ENCODE measurements at regions of chr10 and their contacts with region 1.

Region 1: DNA sequence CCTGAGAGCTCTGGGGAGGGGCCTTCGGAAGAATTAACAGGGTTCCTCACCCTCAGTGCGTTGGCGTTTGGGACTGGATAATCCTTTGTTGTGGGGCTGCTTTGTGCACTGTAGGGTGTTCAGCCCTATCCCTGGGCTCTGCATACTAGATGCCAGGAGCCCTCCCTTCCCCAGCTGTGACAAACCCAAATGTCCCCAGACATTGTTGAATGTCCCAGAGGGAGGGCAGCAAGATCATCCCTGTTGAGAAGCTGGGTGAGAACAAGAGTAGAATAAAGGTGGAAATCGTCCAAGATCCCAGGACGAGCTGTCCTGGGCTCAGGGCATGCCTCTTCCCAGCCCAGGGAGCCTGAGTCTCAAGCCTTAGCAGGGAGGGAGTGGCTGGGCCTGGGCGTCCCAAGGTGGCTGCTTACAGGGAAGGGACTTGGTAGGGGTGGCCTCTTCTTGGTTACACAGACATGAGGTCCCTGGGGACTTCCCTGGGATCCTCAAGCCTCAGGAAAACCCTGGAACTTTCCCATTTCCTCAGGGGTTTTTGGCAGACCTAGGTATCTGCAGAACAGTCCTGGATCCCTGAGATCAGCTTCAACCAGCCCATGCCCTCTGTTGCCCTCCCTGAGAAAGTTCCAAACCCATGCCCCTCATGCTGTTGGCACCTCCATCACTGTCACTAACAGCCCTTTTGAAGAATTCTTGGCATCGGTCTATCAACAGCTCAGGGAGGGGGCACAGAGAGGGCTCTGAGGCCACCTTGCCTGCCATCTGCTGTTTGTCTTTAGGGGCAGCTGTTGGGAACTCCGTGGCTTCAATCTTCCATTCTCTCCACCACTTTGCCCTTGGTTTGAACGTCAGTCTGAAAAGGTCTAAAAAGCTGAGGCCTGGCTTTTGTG is 53.7 kb downstream of the GOLGA7B start:
- DNase-seq: no peak
- H3K4me3 ChIP-seq: no peak overlapping the region
- CTCF ChIP-seq: no peak

Region 2: DNA sequence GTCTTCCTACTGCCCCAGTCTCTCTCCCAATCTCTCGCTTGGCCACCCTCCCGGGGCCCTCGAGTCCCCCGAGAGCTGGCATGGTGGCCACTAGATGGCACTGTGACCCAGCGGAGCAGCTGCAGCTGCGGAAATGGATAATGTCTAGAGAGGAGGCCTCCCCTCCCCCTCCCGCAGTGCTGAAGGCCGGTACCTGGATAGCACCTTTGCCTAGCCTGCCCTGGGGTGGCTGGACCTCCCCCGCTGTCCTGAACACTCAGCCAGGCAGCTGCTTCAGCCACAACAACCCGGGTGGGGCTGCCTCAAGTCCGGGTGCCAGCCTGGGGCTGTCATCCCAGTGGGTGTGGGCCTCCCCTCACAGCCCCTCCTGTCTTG is 11.5 kb after region 1 on chr10:
- CTCF ChIA-PET with region 1: interaction called, 17 read pairs
- POLR2A ChIA-PET with region 1: no interaction called
- DNase-seq: no peak
- H3K4me3 ChIP-seq: no peak overlapping the region
- CTCF ChIP-seq: peak; percentile 91

Region 3: GRCh38 chr10:97925308-97925938 is 22.1 kb after region 1 on chr10:
- CTCF ChIA-PET with region 1: no interaction called
- POLR2A ChIA-PET with region 1: no interaction called
- DNase-seq: no peak
- H3K4me3 ChIP-seq: no peak overlapping the region
- CTCF ChIP-seq: no peak

Region 4: DNA sequence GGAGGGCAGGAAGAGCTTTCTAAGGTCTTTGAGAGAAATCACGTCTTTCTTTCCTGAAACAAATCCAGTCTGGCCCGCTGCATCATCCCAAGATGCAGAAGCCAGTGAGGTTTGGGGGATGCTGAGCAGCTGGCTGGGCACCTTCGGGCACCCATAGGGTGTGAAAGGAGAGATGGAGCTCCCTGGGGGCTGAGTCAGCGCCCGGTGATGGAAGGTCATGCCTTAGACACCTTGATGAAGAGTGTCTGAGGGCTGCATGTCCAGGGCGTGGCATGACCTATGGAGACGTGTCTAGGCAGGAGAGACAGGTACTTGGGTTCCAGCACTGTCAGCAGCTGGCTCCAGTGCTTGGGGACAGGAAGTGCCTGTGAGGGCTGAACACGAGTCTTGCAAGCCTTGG is 34.6 kb after region 1 on chr10:
- CTCF ChIA-PET with region 1: no interaction called
- POLR2A ChIA-PET with region 1: no interaction called
- DNase-seq: no peak
- H3K4me3 ChIP-seq: no peak overlapping the region
- CTCF ChIP-seq: no peak